A673 (cell line): ENCODE measurements at regions of chrX and their contacts with region 1.

Region 1: GRCh38 chrX:101595739-101596419 is 21.9 kb downstream of the ARMCX6 start:
- DNase-seq: peak; percentile 83
- H3K4me3 ChIP-seq: no peak overlapping the region
- H3K27ac ChIP-seq: no peak overlapping the region
- H3K4me1 ChIP-seq: no peaks in the 10 kb centered on the region
- H3K27me3 ChIP-seq: no peaks in the 10 kb centered on the region
- CTCF ChIP-seq: peak; percentile 71

Region 2: DNA sequence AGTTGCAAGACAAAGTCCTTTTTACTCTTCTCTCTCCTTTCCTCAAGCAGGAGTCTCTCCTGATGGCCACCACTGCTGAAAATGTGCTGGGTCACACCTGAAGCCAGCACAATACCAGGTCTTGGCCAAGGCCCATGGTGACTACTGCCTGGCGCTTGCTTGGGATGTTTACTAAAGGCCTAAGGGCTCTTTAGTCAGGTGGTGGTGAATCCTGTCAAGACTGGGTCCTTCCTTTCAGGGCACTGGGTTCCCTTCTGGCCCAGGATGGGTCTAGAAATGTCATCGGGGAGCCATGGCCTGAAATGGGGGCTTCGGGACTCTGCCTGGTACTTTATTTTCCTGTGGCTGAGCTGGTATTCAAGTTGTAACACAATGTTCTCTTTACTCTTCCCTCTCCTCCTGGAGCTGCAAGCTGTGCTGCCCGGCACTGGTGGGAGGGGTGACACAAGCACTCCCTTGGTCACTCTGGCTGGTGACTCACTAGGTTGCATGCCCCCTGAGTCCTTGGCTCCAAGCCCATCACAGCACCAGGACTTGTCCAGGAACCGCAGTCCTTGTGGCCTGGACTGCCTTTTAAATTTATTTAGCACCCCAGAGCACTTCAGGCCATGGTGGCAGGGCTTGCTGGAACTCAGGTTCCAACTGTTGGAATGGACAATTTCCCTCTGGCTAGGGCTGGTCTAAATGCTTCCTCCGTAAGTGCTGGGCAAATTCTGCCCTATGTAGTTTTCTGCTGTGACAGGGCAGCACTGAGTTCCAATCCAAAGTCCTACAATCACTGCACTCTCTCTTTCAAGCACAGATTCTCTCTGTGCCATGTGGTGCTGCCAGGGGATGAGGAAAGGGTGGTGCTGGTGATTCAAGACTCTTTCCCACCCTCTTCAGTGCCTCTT is 615.0 kb before region 1 on chrX:
- CTCF ChIA-PET with region 1: no interaction called
- POLR2A ChIA-PET with region 1: no interaction called
- intact Hi-C with region 1: no loop called
- DNase-seq: no peak
- H3K4me3 ChIP-seq: no peak overlapping the region
- H3K27ac ChIP-seq: no peak overlapping the region
- H3K4me1 ChIP-seq: no peaks in the 10 kb centered on the region
- H3K27me3 ChIP-seq: no peaks in the 10 kb centered on the region
- CTCF ChIP-seq: no peak

Region 3: GRCh38 chrX:101415180-101416145 is 180.4 kb before region 1 on chrX:
- CTCF ChIA-PET with region 1: no interaction called
- POLR2A ChIA-PET with region 1: no interaction called
- intact Hi-C with region 1: loop called (anchors 5 kb)
- DNase-seq: peak; percentile 84
- H3K4me3 ChIP-seq: no peak overlapping the region
- H3K27ac ChIP-seq: no peak overlapping the region
- H3K4me1 ChIP-seq: no peaks in the 10 kb centered on the region
- H3K27me3 ChIP-seq: no peaks in the 10 kb centered on the region
- CTCF ChIP-seq: peak; percentile 81

Region 4: DNA sequence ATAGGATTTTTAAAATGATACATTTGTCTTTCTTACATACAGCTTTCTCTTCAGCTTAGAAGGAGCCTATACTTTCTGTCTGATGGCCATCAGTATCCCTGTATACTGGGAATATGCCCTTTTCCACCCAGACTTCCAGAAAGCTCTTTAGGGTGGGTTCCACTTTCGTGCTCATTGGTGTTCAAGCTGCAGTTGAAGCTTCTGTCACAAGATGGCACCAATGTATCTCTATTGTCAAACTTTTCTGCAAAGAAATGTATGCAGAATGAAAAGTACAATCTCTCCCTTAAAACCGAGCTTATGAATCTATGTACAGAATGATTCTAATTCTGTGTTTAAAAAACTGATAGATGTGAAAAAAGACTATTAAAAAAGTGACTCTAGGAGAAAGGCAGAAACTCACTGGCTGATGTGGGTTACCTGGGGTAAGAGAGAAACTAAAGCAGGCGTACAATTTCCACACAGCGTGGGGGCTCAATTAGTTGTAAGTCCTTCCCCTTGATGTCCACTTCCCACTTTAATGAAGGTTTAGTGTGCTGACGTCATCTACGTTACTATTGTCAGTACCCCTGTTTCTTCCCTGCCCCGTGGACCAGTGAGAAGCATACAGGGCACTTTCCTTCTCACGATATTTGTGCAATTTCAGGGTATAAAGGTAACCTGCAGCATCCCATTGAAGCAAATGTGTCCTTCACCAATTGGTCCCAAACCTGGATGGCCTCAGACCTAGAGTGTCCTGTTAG is 472.3 kb after region 1 on chrX:
- CTCF ChIA-PET with region 1: no interaction called
- POLR2A ChIA-PET with region 1: no interaction called
- intact Hi-C with region 1: loop called (anchors 5 kb)
- DNase-seq: peak; percentile 43
- H3K4me3 ChIP-seq: no peak overlapping the region
- H3K27ac ChIP-seq: no peak overlapping the region
- H3K4me1 ChIP-seq: no peaks in the 10 kb centered on the region
- H3K27me3 ChIP-seq: no peaks in the 10 kb centered on the region
- CTCF ChIP-seq: peak; percentile 65

Region 5: DNA sequence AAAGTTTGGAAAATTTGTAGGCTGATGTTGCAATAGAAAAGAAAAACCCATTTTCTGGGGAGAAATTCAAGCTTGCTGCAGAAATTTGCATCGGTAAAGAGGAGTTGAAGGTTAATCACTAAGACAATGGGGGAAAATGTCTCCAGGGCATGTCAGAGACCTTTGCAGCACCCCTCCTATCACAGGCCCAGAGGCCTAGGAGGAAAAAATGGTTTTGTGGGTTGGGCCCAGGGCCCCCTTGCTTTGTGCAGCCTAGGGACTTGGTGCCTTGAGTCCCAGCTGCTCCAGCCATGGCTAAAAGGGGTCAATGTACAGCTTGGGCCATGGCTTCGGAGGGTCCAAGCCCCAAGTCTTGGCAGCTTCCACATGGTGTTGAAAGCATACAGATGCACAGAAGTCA is 902.9 kb after region 1 on chrX:
- CTCF ChIA-PET with region 1: no interaction called
- POLR2A ChIA-PET with region 1: no interaction called
- intact Hi-C with region 1: loop called (anchors 10 kb)
- DNase-seq: no peak
- H3K4me3 ChIP-seq: no peak overlapping the region
- H3K27ac ChIP-seq: no peak overlapping the region
- H3K4me1 ChIP-seq: no peaks in the 10 kb centered on the region
- H3K27me3 ChIP-seq: no peaks in the 10 kb centered on the region
- CTCF ChIP-seq: no peak